HEK293T (cell line): ENCODE measurements at regions of chr20 and their contacts with region 1.

Region 1: GRCh38 chr20:35454881-35455609 is at the start of gene CEP250:
- DNase-seq: peak; percentile 96

Region 2: GRCh38 chr20:35467339-35468224 is 12.5 kb after region 1 on chr20:
- CTCF ChIA-PET with region 1: interaction called, 4 read pairs
- POLR2A ChIA-PET with region 1: interaction called, 46 read pairs
- DNase-seq: no peak

Region 3: GRCh38 chr20:35489717-35490116 is 34.7 kb after region 1 on chr20:
- CTCF ChIA-PET with region 1: no interaction called
- POLR2A ChIA-PET with region 1: no interaction called
- DNase-seq: no peak

Region 4: GRCh38 chr20:35548391-35548790 is 93.3 kb after region 1 on chr20:
- CTCF ChIA-PET with region 1: no interaction called
- POLR2A ChIA-PET with region 1: no interaction called
- DNase-seq: no peak